Kidney (tissue), 22 donors: ENCODE measurements at regions of chr10 and their contacts with region 1.

Region 1: GRCh38 chr10:95601116-95601719 is 40.0 kb upstream of the SORBS1 start:
- DNase-seq: peak; percentile 83 to 97 (median 89)
- H3K4me3 ChIP-seq: no peak overlapping the region
- H3K27ac ChIP-seq: no peak overlapping the region
- H3K4me1 ChIP-seq: no peaks in the 10 kb centered on the region
- H3K27me3 ChIP-seq: no peaks in the 10 kb centered on the region
- CTCF ChIP-seq: peak; percentile 96

Region 2: GRCh38 chr10:95430231-95430951 is 170.8 kb before region 1 on chr10:
- intact Hi-C with region 1: loop called (anchors 5 kb)
- DNase-seq: peak in 4 of 5 donors; percentile 64 to 86 (median 68)
- H3K4me3 ChIP-seq: no peak overlapping the region
- H3K27ac ChIP-seq: no peak overlapping the region
- H3K4me1 ChIP-seq: peaks cover 0 to 5% (median 0%) of the 10 kb centered on the region in 3 donors
- H3K27me3 ChIP-seq: no peaks in the 10 kb centered on the region
- CTCF ChIP-seq: peak; percentile 99